Panc1 (cell line): ENCODE measurements at regions of chr19 and their contacts with region 1.

Region 1: GRCh38 chr19:19531951-19532805 is 3.5 kb downstream of the YJEFN3 start:
- DNase-seq: no peak
- ATAC-seq: peak; percentile 82
- H3K4me3 ChIP-seq: no peak overlapping the region
- H3K27ac ChIP-seq: no peak overlapping the region
- H3K4me1 ChIP-seq: no peaks in the 10 kb centered on the region
- H3K27me3 ChIP-seq: no peaks in the 10 kb centered on the region
- CTCF ChIP-seq: peak; percentile 92

Region 2: GRCh38 chr19:19232261-19232721 is 299.9 kb before region 1 on chr19:
- CTCF ChIA-PET with region 1: no interaction called
- POLR2A ChIA-PET with region 1: no interaction called
- in situ Hi-C with region 1: no loop called
- intact Hi-C with region 1: no loop called
- DNase-seq: no peak
- ATAC-seq: no peak
- H3K4me3 ChIP-seq: no peak overlapping the region
- H3K27ac ChIP-seq: no peak overlapping the region
- H3K4me1 ChIP-seq: no peaks in the 10 kb centered on the region
- H3K27me3 ChIP-seq: no peaks in the 10 kb centered on the region
- CTCF ChIP-seq: no peak

Region 3: GRCh38 chr19:19405971-19406877 is 126.0 kb before region 1 on chr19:
- CTCF ChIA-PET with region 1: no interaction called
- POLR2A ChIA-PET with region 1: no interaction called
- in situ Hi-C with region 1: no loop called
- intact Hi-C with region 1: no loop called
- DNase-seq: no peak
- ATAC-seq: peak; percentile 32
- H3K4me3 ChIP-seq: peak overlapping the region; percentile 59 to 71
- H3K27ac ChIP-seq: peak overlapping the region; percentile 74
- H3K4me1 ChIP-seq: peaks cover 32% of the 10 kb centered on the region
- H3K27me3 ChIP-seq: no peaks in the 10 kb centered on the region
- CTCF ChIP-seq: no peak

Region 4: GRCh38 chr19:19634516-19635312 is 102.5 kb after region 1 on chr19:
- CTCF ChIA-PET with region 1: no interaction called
- POLR2A ChIA-PET with region 1: interaction called, 17 read pairs
- in situ Hi-C with region 1: no loop called
- intact Hi-C with region 1: no loop called
- DNase-seq: no peak
- ATAC-seq: no peak
- H3K4me3 ChIP-seq: no peak overlapping the region
- H3K27ac ChIP-seq: no peak overlapping the region
- H3K4me1 ChIP-seq: no peaks in the 10 kb centered on the region
- H3K27me3 ChIP-seq: no peaks in the 10 kb centered on the region
- CTCF ChIP-seq: no peak

Region 5: DNA sequence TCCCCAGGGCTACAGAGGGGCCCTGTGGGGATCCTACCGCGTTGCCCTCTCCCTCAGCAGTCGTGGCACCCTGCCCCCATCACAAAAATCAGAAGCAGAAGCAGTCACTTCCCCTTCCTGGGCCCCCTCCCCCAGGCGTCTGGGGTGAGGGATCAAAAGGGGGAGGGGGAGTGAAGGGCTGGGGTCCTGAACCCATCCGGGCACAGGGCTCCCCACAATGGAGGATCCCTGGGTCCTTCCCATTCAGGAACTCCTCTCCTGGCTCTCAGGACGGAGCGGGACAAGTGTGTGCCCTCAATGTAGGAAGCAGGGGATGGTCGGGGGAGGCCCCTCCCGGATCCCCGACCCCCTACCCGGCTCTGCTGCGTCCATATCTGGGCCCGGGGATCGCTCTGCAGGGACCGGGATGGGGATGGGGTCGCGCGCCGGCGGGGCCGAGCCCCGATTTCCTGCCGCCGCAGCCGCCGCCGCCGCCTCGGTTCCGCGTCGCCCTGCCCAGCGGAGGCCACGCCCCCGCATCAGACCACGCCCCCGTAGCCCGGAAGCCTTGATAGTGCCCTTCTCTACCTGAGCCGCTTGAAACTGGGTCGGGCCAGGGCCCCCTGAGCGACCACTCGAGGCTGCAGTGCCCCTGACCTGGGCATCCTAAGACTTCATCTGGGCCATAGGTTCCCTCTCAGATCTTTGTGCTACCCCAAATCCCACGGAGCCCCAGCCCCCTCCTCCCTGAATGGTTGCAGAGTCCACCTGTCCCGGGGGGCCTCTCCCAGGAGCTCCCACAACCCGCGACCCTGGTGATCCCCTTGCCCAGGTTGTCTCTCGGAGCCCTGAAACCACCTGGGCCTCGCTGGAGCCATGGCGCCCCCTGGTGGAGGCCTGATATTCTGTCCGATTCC is 111.2 kb after region 1 on chr19 and contains the start of gene GMIP:
- CTCF ChIA-PET with region 1: interaction called, 4 read pairs
- POLR2A ChIA-PET with region 1: no interaction called
- in situ Hi-C with region 1: no loop called
- intact Hi-C with region 1: loop called (anchors 10 kb)
- DNase-seq: no peak
- ATAC-seq: peak; percentile 92
- H3K4me3 ChIP-seq: peak within 1 kb of the TSS; percentile 76 to 79
- H3K27ac ChIP-seq: peak within 1 kb of the TSS; percentile 79
- H3K4me1 ChIP-seq: no peaks in the 10 kb centered on the region; the same call in 1 of the 2 replicates
- H3K27me3 ChIP-seq: no peaks in the 10 kb centered on the region
- CTCF ChIP-seq: peak; percentile 89
- total RNA-seq, gene GMIP: 18.1 TPM

Region 6: GRCh38 chr19:20067943-20068342 is 535.8 kb after region 1 on chr19:
- CTCF ChIA-PET with region 1: interaction called, 16 read pairs
- POLR2A ChIA-PET with region 1: no interaction called
- in situ Hi-C with region 1: no loop called
- intact Hi-C with region 1: no loop called
- DNase-seq: no peak
- ATAC-seq: no peak
- H3K4me3 ChIP-seq: no peak overlapping the region
- H3K27ac ChIP-seq: no peak overlapping the region
- H3K4me1 ChIP-seq: no peaks in the 10 kb centered on the region
- H3K27me3 ChIP-seq: no peaks in the 10 kb centered on the region
- CTCF ChIP-seq: no peak